ENCODE measurements at regions of chr1 and their contacts with region 1.

Region 1: DNA sequence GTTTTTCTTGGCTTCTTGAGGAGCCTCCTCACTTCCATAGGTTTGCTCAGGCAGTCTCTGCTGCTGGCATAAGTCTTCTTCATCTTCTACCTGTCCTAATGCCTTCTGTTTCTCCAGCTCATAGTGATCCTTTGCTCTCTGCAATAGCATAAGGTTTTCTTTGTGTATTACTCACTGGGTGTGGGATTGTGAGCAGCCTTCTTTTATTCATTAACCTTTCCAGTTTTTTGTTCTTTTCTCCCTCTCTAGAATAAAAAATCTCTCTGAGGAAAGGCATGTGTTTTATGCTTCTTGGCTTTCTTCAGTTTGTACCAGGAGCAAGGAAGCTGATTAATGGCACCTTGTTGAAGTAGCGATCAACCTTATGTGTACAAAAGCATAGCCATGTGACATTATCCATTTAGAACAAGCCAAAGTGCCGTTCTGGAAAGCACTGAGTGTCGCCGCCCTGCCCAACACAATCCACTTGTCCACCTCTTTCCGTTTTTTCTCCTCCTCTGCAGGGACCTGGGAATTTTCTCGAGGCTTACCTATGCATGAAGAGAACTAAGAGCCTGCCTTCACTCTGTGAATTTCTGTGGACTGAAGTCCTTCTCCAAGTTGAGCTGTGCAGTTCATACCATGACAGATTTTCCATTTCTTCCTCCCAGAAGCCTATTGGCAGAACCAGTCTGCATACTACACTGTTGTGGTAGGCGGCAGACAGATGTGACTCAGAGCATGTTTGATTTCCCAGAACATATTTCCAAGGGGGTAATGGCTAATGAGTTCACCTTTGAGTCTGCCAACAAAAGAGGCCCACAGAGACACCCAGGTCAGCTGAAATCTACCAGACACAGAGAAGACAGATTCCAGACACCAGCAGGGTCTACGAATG is 39.0 kb downstream of the DPT start:
- DNase-seq: no peak
- H3K4me3 ChIP-seq: no peak overlapping the region
- H3K27ac ChIP-seq: peak overlapping the region in 3 of 4 donors; percentile 66 to 70 (median 66)
- H3K4me1 ChIP-seq: peaks cover 0 to 64% (median 57%) of the 10 kb centered on the region in 4 donors
- H3K27me3 ChIP-seq: no peaks in the 10 kb centered on the region
- CTCF ChIP-seq: no peak
- EP300 ChIP-seq: no peak
- POLR2A ChIP-seq: no peak

Region 2: DNA sequence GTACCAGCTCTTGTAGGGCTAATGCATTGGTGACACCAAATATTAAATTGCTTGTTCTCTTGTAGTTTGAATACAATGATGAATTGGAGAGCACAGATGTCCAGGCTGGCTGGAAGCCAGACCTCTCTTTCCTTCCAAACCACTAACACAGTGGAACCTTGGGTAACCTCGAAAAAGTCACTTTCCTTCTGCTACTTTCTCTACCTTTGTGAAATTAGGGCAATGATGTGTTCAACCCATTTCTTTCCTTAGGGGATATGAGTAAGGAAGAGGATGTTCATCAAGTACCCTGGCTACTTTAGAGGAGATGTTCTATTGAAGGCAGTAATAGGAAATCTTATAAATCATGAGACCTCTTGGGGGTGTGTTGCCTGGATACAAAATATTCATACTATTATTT is 201.8 kb before region 1 on chr1:
- intact Hi-C with region 1: loop called (anchors 10 kb)
- DNase-seq: peak; percentile 86
- H3K4me3 ChIP-seq: no peak overlapping the region
- H3K27ac ChIP-seq: peak overlapping the region; percentile 42 to 66 (median 54)
- H3K4me1 ChIP-seq: peaks cover 0 to 80% (median 72%) of the 10 kb centered on the region in 4 donors
- H3K27me3 ChIP-seq: no peaks in the 10 kb centered on the region
- CTCF ChIP-seq: no peak
- EP300 ChIP-seq: no peak
- POLR2A ChIP-seq: no peak

Region 3: GRCh38 chr1:168664069-168664834 is 25.7 kb before region 1 on chr1:
- intact Hi-C with region 1: no loop called
- DNase-seq: no peak
- H3K4me3 ChIP-seq: no peak overlapping the region
- H3K27ac ChIP-seq: no peak overlapping the region
- H3K4me1 ChIP-seq: peaks cover 0 to 14% (median 3%) of the 10 kb centered on the region in 4 donors
- H3K27me3 ChIP-seq: no peaks in the 10 kb centered on the region
- CTCF ChIP-seq: no peak
- EP300 ChIP-seq: no peak
- POLR2A ChIP-seq: no peak

Region 4: GRCh38 chr1:168803806-168804510 is 114.0 kb after region 1 on chr1:
- intact Hi-C with region 1: no loop called
- DNase-seq: no peak
- H3K4me3 ChIP-seq: no peak overlapping the region
- H3K27ac ChIP-seq: no peak overlapping the region
- H3K4me1 ChIP-seq: no peaks in the 10 kb centered on the region
- H3K27me3 ChIP-seq: no peaks in the 10 kb centered on the region
- CTCF ChIP-seq: no peak
- EP300 ChIP-seq: no peak
- POLR2A ChIP-seq: no peak

Measured in sigmoid colon (tissue), 7 donors.